HEK293 (cell line): ENCODE measurements at regions of chr17 and their contacts with region 1.

Region 1: GRCh38 chr17:55527540-55528118 is 16.4 kb upstream of the SMIM36 start:
- H3K4me3 ChIP-seq: no peak overlapping the region
- H3K27ac ChIP-seq: no peak overlapping the region
- H3K4me1 ChIP-seq: no peaks in the 10 kb centered on the region
- CTCF ChIP-seq: peak; percentile 67; the same call in 1 of the 2 replicates

Region 2: DNA sequence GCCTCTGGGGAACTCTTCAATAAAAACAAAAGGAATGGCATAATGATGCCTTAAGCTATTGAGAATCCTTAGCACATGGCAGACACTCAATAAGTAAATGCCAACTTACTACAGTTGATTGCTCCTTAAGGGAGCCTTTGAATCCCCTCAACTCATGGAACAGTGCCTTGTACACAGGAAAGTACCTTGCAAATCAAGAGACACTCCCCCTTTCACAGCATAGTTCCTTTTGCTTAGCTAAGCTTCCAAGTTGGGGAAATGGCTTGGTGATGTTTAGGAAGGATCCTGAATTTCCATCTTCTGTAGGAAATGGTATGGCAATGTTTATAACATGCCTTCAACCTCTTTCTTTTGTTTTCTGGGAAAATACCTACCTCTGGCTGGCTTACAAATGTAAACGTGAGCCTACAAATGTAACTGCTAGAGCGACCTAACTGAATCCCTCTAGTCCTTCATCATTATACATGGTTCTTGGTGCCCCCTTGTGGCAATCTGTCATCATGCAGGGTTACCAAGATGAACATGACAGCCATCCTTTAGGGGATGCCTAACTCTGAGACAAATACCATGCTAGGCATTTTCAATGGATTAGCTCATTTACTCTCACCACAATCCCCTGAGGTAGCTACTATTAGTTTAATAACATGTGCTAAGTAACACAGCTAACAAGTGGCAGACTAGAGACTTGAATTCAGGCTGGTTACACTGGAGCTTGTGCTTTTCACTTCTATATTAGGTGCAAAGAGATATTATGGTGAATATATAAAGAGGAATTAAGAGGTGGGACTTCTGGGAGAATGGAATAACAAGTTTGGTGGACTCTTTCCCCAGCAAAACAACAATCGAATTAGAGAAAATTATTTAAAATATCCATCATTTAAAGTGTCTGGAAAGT is 170.9 kb before region 1 on chr17:
- CTCF ChIA-PET with region 1: interaction called, 11 read pairs
- POLR2A ChIA-PET with region 1: no interaction called
- H3K4me3 ChIP-seq: no peak overlapping the region
- H3K27ac ChIP-seq: no peak overlapping the region
- H3K4me1 ChIP-seq: no peaks in the 10 kb centered on the region
- CTCF ChIP-seq: peak; percentile 26; the same call in 1 of the 2 replicates

Region 3: GRCh38 chr17:55549140-55549539 is 21.5 kb after region 1 on chr17:
- CTCF ChIA-PET with region 1: interaction called, 11 read pairs
- POLR2A ChIA-PET with region 1: no interaction called
- H3K4me3 ChIP-seq: no peak overlapping the region
- H3K27ac ChIP-seq: no peak overlapping the region
- H3K4me1 ChIP-seq: no peaks in the 10 kb centered on the region
- CTCF ChIP-seq: no peak

Region 4: DNA sequence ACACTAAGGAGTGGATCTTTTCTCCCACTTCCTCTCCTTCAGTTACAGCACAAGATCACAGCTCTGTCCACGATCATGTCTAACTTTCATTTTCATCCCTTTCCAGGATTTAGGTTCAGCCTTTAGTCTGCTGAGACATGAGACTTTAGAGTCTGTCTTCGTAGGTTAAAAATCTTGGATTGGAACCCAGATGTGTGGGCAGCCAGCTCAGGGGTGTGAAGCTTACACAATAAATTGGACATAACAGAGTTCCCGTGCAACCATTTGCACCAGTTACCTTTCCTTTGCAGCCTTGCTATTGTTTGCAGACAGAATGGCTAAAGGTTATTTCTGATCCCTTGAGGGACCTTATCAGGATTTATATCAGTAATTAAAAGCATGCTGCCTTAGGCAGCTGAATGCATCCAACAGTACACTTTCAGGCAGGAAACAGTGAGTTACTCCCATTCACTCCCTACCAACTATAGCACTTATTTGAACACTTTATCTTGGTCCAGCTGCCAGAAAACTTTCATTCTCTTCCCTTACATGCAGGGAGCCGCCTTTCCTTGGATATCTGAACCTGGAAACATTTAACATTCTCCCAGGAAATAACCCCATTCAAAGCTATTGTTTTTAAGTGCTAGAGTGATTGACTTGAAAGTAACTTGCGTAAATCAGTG is 107.8 kb after region 1 on chr17:
- CTCF ChIA-PET with region 1: interaction called, 34 read pairs
- POLR2A ChIA-PET with region 1: no interaction called
- H3K4me3 ChIP-seq: no peak overlapping the region
- H3K27ac ChIP-seq: no peak overlapping the region
- H3K4me1 ChIP-seq: peaks cover 4% of the 10 kb centered on the region; the same call in 1 of the 2 replicates
- CTCF ChIP-seq: no peak

Region 5: DNA sequence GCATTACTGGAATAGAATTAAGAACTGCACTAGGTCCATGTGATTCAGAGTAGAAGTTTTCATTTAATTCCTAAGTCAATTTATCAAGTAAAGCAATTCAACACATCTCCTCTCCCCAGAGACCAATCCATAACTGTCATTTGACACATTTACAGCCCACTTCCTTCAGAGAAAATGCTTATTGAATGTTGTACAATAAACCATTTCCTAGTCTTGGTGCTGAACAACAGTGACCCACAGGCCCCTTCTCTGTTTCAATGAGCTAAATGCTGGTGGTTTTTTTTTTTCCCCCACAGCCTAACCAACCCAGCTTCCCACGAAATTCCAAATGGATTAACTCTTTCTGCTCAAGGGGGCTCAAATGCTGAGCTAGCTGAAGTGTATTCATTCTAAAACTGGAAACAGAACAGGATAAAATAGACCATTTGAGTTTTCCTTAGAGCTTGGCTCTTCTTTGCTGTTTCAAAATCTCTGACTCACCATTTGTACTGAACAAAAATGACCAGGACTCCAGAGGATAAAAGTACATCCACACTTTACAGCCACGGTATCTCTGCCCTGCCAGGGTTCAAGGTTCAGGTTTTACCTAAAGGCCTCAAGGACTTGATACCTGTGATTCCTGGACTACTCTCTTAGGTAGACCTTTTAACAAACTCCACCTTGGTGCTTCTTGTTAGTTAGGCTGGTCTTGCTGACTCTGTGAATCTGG is 132.7 kb after region 1 on chr17:
- CTCF ChIA-PET with region 1: interaction called, 10 read pairs
- POLR2A ChIA-PET with region 1: no interaction called
- H3K4me3 ChIP-seq: no peak overlapping the region
- H3K27ac ChIP-seq: no peak overlapping the region
- H3K4me1 ChIP-seq: peaks cover 5% of the 10 kb centered on the region; the same call in 1 of the 2 replicates
- CTCF ChIP-seq: no peak

Region 6: GRCh38 chr17:55726440-55726839 is 198.8 kb after region 1 on chr17:
- CTCF ChIA-PET with region 1: interaction called, 14 read pairs
- POLR2A ChIA-PET with region 1: no interaction called
- H3K4me3 ChIP-seq: no peak overlapping the region
- H3K27ac ChIP-seq: no peak overlapping the region
- H3K4me1 ChIP-seq: peaks cover 39% of the 10 kb centered on the region
- CTCF ChIP-seq: no peak

Region 7: DNA sequence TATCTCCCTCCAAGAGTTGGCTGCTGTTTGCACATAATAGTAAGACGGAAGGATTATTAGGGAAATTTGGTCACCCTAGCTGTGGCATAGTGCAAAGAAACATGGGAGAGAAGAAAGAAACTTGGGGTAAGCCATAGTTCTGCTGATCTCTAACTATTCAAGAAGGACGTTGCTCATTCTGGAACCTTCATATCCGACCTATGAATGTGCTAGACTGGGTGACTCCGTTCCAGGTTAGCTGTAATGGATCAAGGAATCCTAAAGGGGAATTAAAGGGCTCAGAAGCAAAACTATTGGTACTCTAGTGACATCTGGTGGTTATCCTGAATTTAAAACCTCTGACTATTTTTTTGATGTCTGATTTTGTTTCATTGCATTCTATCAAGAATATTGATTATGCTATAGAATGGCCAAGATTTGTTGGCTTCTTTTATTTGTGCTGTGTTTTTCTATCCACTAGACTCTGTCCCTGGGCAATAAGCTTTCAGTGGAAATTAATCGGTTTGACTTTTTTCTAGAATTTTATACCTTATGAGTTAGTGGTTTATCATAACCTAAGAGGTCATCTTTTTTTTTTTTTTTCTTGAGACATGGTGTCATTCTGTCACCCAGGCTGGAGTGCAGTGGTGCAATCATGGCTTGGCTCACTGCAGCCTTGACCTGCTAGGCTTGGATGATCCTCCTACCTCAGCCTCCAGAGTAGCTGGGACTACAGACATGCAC is 242.7 kb after region 1 on chr17:
- CTCF ChIA-PET with region 1: interaction called, 171 read pairs
- POLR2A ChIA-PET with region 1: no interaction called
- H3K4me3 ChIP-seq: no peak overlapping the region
- H3K27ac ChIP-seq: no peak overlapping the region
- H3K4me1 ChIP-seq: no peaks in the 10 kb centered on the region
- CTCF ChIP-seq: no peak